A549 (cell line): ENCODE measurements at regions of chr17 and their contacts with region 1.

Region 1: DNA sequence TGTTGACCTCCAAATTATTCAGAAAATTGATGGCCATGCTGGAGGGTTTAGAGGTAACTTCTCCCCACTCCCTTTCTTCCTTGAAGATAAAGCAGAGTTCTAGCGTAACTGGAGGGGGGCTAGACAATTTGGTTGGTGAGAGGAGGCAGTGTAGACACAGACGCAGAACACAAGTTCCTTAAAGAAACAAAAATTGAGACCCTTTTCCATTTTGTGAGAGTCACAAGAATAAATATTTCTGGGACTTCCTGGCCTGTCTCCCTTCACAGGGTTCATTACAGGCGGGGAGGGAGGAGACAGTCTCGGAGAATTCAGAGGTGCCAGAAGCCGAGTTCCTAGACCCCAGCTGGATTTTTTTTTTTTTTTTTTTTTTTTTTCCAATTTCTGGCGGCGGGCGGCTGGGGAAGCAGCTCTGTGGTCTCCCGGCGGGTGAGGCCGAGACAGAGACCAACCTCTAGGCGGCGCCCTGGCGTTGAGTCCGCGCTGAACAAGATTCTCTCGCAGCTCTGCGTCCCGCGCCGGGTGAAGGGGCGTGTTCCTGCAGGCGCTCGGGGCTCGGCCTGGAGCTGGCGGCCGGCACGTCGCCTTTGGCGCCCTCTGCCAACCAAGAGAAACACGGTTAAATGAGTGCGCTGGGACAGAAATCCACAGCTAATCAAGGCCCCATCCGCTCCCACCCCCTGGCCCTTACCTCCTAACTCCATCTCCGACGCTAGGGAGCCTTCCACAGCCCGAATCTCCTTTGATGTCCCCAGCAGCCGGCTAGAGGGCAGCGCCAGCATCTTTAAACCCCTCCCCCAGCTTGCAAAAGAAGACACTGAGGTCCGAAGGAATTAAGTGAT is 10.2 kb upstream of the HOXB9 start:
- DNase-seq: peak; percentile 95 to 97
- ATAC-seq: peak; percentile 85 to 95
- H3K4me3 ChIP-seq: no peak overlapping the region
- H3K27ac ChIP-seq: peak overlapping the region; percentile 53 to 74
- H3K4me1 ChIP-seq: peaks cover 48% of the 10 kb centered on the region
- CTCF ChIP-seq: peak; percentile 93
- EP300 ChIP-seq: no peak
- POLR2A ChIP-seq: no peak
- RAD21 ChIP-seq: peak; percentile 41 to 49; a peak in 4 of 5 replicates

Region 2: GRCh38 chr17:48576479-48577309 is 59.7 kb before region 1 on chr17:
- CTCF ChIA-PET with region 1: no interaction called
- POLR2A ChIA-PET with region 1: no interaction called
- DNase-seq: no peak
- ATAC-seq: peak in 1 of 2 experiments; percentile 28; a peak in 2 of 6 replicates
- H3K4me3 ChIP-seq: peak overlapping the region; percentile 2; the same call in 1 of the 3 replicates
- H3K27ac ChIP-seq: peak overlapping the region in 1 of 2 experiments; percentile 40; a peak in 2 of 6 replicates
- H3K4me1 ChIP-seq: peaks cover 16% of the 10 kb centered on the region
- CTCF ChIP-seq: no peak
- EP300 ChIP-seq: no peak
- POLR2A ChIP-seq: no peak
- RAD21 ChIP-seq: no peak

Region 3: DNA sequence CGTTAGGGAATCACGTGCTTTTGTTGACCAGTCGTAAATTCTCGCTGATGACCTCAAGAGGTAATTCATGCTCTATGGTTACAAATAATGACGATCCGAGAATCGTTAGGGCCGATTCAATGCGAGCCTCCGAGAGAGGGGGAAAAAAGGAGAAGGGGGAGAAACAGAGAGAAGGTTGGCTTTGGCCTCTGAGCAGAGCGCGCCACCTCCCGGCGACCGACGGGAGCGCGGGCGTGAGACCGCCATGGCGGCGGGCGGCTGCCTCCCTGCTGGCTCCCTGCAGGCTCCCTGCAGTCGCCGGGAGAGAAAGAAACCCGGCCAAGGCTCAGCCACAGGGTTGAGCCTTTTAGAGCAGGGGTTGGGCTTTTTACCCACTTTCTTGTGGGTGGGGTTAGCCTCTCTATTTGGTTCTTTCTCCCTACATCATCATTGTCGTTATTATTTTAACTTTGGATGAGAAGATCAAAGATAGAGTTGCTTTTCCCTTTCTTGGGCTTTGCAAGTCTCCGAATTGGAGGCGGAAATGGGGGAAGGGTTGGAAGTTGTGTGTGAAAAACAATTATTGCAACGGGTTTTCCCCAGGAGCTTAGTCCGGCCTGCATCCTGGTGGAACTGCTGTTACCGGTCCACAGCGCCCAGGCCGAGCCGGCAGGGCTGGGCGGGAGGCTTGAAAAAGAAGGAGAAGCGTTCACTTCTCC is 42.4 kb before region 1 on chr17:
- CTCF ChIA-PET with region 1: interaction called, 10 read pairs
- POLR2A ChIA-PET with region 1: no interaction called
- DNase-seq: peak; percentile 81 to 94
- ATAC-seq: peak; percentile 74 to 92
- H3K4me3 ChIP-seq: peak overlapping the region; percentile 22; the same call in 2 of the 3 replicates
- H3K27ac ChIP-seq: peak overlapping the region in 1 of 2 experiments; percentile 60; a peak in 4 of 6 replicates
- H3K4me1 ChIP-seq: peaks cover 5% of the 10 kb centered on the region
- CTCF ChIP-seq: peak; percentile 99
- EP300 ChIP-seq: no peak
- POLR2A ChIP-seq: no peak
- RAD21 ChIP-seq: peak; percentile 91 to 94

Region 4: DNA sequence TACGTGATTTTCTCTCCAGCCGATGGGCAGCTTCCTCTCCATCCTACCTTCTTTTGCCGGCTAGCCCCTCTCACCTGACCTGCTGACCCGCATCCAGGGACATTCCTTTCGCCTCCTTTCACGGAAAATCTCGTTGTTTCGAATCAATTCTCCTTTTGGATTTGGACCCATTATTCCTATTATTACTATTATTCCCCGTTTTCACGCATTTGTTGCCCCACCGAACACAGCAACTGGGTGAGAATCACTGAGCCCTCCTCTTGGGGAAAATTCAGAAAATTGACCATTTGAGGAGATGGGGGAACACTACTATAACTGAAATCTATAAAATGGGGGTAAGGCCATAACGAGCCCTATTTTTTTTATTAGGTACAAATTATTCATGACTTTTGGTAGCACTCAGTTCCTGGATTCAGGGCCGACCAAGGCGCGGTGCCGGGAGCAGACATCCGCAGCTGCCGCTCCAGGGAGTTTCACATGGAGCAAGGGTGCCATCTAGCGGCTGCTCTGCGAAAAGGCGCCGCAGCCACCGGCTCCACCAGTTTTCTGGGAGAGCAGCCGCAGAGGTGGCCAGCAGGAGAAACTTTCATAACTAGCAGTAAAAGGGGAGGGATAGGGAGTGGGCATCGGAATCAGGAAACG is 18.0 kb before region 1 on chr17:
- CTCF ChIA-PET with region 1: interaction called, 42 read pairs
- POLR2A ChIA-PET with region 1: interaction called, 3 read pairs
- DNase-seq: peak; percentile 86 to 97
- ATAC-seq: peak; percentile 74 to 78
- H3K4me3 ChIP-seq: no peak overlapping the region
- H3K27ac ChIP-seq: no peak overlapping the region
- H3K4me1 ChIP-seq: peaks cover 12% of the 10 kb centered on the region
- CTCF ChIP-seq: peak; percentile 99
- EP300 ChIP-seq: no peak
- POLR2A ChIP-seq: no peak
- RAD21 ChIP-seq: peak; percentile 97 to 99

Region 5: GRCh38 chr17:48646183-48647102 is 10.0 kb after region 1 on chr17:
- CTCF ChIA-PET with region 1: interaction called, 34 read pairs
- POLR2A ChIA-PET with region 1: interaction called, 5 read pairs
- DNase-seq: peak; percentile 64 to 80
- ATAC-seq: peak; percentile 76 to 79
- H3K4me3 ChIP-seq: peak overlapping the region; percentile 74
- H3K27ac ChIP-seq: peak overlapping the region; percentile 92 to 95
- H3K4me1 ChIP-seq: peaks cover 34% of the 10 kb centered on the region
- CTCF ChIP-seq: no peak
- EP300 ChIP-seq: no peak
- POLR2A ChIP-seq: peak; percentile 35
- RAD21 ChIP-seq: no peak

Region 6: DNA sequence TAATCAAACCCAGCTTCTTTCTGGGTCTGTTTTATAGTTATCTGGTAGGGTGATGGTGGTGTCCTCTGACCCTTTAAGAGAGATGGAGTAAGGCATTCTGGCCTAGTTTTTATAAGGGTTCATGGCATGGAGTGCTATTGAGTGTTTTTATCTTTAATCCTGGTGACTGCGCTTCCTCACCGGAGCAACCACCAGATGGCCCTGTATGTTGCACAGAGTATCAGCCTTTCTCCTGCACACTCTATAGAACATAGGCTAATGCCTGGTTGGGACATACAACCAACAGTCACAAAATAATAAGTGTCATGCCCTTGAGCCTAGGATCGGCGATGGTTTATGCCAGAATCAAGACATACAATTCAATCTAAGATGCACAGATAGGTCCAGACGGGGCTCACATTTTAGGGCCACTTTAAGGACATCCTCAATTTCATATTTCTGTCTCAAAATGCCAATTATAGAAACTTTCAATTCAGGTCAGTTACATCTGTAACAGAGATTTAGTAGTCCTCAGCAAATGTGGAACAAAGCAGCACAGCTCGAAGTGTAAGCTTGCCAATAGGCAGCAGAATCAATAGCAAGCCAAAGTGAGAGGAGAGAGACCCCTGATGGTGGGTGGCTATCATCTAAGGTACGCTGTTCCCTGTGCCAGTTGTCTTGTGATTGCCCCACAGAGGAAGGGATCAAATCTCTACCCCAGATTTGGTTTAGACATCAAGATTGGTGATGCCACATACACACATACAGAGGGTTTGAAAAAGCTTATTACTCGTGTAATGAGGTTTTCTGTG is 26.9 kb after region 1 on chr17:
- CTCF ChIA-PET with region 1: interaction called, 37 read pairs
- POLR2A ChIA-PET with region 1: interaction called, 12 read pairs
- DNase-seq: no peak
- ATAC-seq: peak; percentile 73 to 83
- H3K4me3 ChIP-seq: no peak overlapping the region
- H3K27ac ChIP-seq: no peak overlapping the region
- H3K4me1 ChIP-seq: no peaks in the 10 kb centered on the region
- CTCF ChIP-seq: no peak
- EP300 ChIP-seq: no peak
- POLR2A ChIP-seq: no peak
- RAD21 ChIP-seq: 0 out of 5 replicates have a peak, but pooled peaks of 1 of the 2 experiments have one; percentile 11

Region 7: GRCh38 chr17:48791128-48792032 is 155.0 kb after region 1 on chr17:
- CTCF ChIA-PET with region 1: interaction called, 15 read pairs
- POLR2A ChIA-PET with region 1: no interaction called
- DNase-seq: peak; percentile 92 to 94
- ATAC-seq: peak; percentile 77 to 89
- H3K4me3 ChIP-seq: no peak overlapping the region
- H3K27ac ChIP-seq: peak overlapping the region; percentile 68
- H3K4me1 ChIP-seq: peaks cover 49% of the 10 kb centered on the region
- CTCF ChIP-seq: peak; percentile 96
- EP300 ChIP-seq: no peak
- POLR2A ChIP-seq: no peak
- RAD21 ChIP-seq: peak; percentile 96 to 98

Region 8: DNA sequence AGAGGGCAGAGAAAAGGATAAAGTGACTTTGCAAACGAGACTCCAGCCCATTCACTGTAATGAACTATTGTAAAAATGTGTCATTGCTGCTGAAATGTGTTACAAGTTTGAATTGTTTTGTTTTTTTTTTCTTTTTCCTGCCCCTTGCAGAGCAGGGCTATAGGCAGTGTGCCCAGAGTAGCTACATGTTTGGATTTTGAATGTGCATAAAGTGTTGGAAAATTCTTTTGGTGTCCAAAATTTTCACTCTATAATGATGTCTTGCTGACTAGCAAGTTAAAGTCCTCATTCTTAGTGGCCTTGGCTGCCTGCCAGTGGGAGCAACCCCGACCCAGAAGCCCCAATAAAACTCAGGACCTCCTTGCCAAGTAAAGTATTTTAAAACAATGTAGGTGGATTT is 427.3 kb after region 1 on chr17:
- CTCF ChIA-PET with region 1: no interaction called
- POLR2A ChIA-PET with region 1: interaction called, 11 read pairs
- DNase-seq: no peak
- ATAC-seq: no peak
- H3K4me3 ChIP-seq: no peak overlapping the region
- H3K27ac ChIP-seq: no peak overlapping the region
- H3K4me1 ChIP-seq: peaks cover 4% of the 10 kb centered on the region
- CTCF ChIP-seq: no peak
- EP300 ChIP-seq: no peak
- POLR2A ChIP-seq: no peak
- RAD21 ChIP-seq: no peak